ENCODE measurements at regions of chr12 and their contacts with region 1.

Region 1: GRCh38 chr12:50763639-50764285 is at the start of gene ATF1:
- DNase-seq: peak; percentile 79 to 86
- H3K4me3 ChIP-seq: peak within 1 kb of the TSS; percentile 88
- H3K27ac ChIP-seq: peak within 1 kb of the TSS; percentile 92
- H3K4me1 ChIP-seq: peaks cover 27% of the 10 kb centered on the region
- H3K27me3 ChIP-seq: no peaks in the 10 kb centered on the region
- CTCF ChIP-seq: no peak
- total RNA-seq, gene ATF1: 29.8 and 37.9 TPM in 2 replicates

Region 2: DNA sequence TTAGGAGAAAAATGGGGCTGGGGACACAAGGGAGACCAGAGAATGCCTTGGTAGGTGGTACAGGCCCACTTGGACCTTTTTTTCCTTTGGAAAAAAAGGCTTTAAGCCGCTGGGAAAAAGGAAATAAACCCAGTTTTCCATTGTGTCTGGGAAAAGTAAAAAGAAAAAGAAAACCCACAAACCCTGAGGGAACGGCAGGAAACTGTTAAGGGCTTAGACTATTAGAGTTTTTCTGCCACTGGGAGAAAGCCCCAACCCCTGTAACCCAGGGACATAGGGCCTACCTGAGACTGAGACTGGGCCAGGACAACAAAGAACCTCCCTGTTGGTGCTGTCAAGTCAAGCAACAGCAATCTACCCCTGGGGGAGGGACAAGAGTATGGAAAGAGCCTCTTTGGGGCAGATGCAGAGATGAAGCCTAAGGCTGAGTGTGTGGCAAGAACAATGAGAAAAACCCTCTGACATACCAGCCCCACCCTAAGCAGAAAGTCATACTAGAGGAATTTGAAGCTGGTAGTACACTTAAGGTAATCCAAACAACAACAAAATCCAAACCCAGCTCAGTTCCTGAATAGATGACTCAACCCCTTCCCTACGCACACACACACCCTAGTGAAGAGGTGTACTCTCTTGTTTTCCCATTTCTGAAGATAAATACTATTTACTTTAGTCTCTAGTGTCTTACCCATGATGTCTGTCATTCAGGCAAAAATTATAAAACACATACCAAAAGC is 22.9 kb after region 1 on chr12:
- CTCF ChIA-PET with region 1: interaction called, 12 read pairs
- POLR2A ChIA-PET with region 1: interaction called, 8 read pairs
- intact Hi-C with region 1: loop called (anchors 2 kb)
- DNase-seq: peak; percentile 73 to 99
- H3K4me3 ChIP-seq: no peak overlapping the region
- H3K27ac ChIP-seq: peak overlapping the region; percentile 90
- H3K4me1 ChIP-seq: peaks cover 40% of the 10 kb centered on the region
- H3K27me3 ChIP-seq: no peaks in the 10 kb centered on the region
- CTCF ChIP-seq: no peak

Region 3: GRCh38 chr12:50825372-50825838 is 61.6 kb after region 1 on chr12:
- CTCF ChIA-PET with region 1: interaction called, 4 read pairs
- POLR2A ChIA-PET with region 1: no interaction called
- intact Hi-C with region 1: loop called (anchors 5 kb)
- DNase-seq: peak in 1 of 2 experiments; percentile 66
- H3K4me3 ChIP-seq: no peak overlapping the region
- H3K27ac ChIP-seq: peak overlapping the region; percentile 47
- H3K4me1 ChIP-seq: peaks cover 4% of the 10 kb centered on the region
- H3K27me3 ChIP-seq: no peaks in the 10 kb centered on the region
- CTCF ChIP-seq: peak; percentile 79

Region 4: DNA sequence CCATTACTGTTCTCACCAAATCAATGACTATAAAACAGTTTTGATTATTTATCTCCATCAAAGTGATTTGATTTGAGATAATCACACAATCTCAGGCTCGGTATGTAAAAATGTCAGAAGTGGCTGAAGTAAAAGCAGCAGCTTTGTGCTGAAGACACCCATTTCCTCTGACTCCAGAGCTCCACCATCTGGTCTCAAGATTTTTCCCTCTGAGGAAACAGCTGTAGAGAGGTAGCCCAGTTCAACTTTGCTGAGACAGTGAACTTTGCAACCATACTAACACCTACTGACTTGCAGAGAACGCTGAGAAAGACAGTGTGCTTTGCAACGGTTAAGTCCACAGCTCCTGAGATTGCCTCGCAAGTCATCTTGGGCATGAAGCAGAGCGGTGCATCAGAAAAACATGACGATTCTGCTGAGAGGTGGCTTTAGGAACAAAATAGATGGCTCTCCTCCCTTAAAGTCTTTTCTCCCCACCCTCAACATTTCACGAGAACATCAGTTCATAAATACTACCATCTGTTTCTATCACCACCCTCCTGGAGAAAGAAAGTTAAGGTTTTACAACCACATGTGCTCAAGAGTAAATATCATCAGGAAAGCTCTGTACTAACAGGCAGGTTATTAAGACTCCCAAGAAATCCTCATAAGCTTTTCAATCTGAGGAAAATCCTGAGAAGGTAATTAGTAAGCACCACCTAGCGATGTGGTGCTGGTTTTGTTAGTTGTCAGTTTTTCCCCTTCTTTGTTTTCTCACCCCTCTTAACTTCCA is 223.4 kb after region 1 on chr12:
- CTCF ChIA-PET with region 1: interaction called, 7 read pairs
- POLR2A ChIA-PET with region 1: no interaction called
- intact Hi-C with region 1: loop called (anchors 2 kb)
- DNase-seq: peak in 1 of 2 experiments; percentile 18
- H3K4me3 ChIP-seq: no peak overlapping the region
- H3K27ac ChIP-seq: no peak overlapping the region
- H3K4me1 ChIP-seq: no peaks in the 10 kb centered on the region
- H3K27me3 ChIP-seq: no peaks in the 10 kb centered on the region
- CTCF ChIP-seq: peak; percentile 62; the same call in 1 of the 2 replicates

Region 5: GRCh38 chr12:51246254-51246853 is 482.6 kb after region 1 on chr12:
- CTCF ChIA-PET with region 1: no interaction called
- POLR2A ChIA-PET with region 1: interaction called, 3 read pairs
- intact Hi-C with region 1: loop called (anchors 10 kb)
- DNase-seq: no peak
- H3K4me3 ChIP-seq: no peak overlapping the region
- H3K27ac ChIP-seq: no peak overlapping the region
- H3K4me1 ChIP-seq: peaks cover under 1% of the 10 kb centered on the region; the same call in 1 of the 2 replicates
- H3K27me3 ChIP-seq: no peaks in the 10 kb centered on the region
- CTCF ChIP-seq: no peak

Region 6: DNA sequence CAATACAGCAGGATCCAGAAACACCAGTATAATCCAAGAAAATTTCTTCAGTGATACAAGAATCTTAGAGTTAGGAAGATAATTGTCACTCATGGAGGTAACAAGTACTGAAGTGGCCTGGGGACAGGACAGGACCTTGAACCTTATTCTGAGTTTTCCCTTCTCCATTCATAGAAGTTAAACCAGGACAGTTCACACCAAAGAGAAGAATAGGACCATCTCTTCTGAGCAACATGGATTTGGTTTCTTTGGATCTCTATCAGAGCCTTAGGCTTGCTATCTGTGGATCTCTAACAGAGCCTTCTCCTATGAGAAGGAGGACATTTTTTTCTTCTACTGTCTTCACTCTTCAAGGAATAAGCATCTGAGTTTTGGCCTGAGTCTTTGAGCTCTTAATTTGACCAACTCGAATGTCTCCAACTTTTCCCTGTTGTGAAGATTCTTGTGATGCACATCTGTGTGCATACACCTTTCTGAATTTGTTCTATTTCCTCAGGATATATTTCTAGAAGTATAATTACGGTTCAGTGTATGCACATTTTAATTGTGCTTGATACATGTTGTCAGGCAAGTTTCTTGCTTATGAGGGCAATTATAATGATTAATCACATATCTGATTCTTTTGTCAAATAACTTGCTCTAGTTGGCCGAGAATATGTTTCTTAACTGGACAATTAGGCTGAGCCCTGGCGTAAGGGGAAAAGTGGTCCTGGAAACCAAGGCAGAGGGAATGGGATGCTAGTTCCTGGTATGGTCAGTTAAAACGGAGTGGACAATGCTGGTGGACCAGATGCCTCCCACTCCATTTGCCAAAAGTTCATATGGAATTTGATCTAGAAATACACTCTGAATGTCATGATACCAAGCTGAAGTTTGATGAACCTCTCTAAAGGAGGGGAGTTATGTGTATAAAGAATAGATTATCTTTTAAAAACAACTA is 1722.7 kb after region 1 on chr12:
- CTCF ChIA-PET with region 1: interaction called, 11 read pairs
- POLR2A ChIA-PET with region 1: no interaction called
- intact Hi-C with region 1: no loop called
- DNase-seq: no peak
- H3K4me3 ChIP-seq: no peak overlapping the region
- H3K27ac ChIP-seq: no peak overlapping the region
- H3K4me1 ChIP-seq: no peaks in the 10 kb centered on the region
- H3K27me3 ChIP-seq: no peaks in the 10 kb centered on the region
- CTCF ChIP-seq: no peak

Measured in PC-9 (cell line).